Activated B cell treated with CpG ODN at 0.5 μM for 24 hours (primary cell): ENCODE measurements at regions of chr1 and their contacts with region 1.

Region 1: DNA sequence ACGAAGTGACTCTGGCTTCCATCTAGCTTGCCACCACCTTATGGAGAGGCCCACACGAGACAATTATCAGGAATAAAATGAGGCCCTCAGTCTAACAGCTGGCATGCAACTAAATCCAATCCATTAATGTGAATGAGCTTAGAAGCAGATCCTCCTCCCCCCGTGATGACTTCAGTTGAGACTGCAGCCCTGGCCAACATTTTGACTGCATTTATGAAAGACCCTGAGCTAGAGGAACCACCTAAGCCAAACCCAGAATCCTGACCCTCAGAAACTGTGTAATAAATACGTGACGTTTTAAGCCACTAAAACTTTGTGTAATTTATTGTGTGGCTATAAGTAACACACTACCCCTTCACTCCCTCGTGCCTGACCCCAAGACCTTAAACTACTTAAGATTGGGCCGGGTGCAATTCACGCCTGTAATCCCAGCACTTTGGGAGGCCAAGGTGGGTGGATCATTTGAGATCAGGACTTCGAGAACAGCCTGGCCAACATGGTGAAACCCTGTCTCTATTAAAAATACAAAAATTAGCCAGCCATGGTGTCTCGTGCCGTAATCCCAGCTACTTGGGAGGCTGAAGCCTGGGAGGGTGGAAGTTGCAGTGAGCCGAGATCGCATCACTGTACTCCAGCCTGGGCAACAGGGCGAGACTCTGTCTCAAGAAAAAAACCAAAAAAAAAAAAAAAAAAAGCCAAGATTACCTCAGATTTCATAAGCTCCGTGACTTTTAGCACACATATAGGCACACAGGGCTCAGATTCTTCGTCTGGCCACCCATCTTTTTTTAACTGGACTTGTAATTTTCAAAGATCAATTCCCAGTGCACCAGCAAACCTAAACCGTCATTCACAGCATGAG is 72.5 kb downstream of the ENAH start:
- DNase-seq: no peak
- ATAC-seq: no peak
- H3K4me3 Mint-ChIP-seq: no peak overlapping the region
- H3K27ac Mint-ChIP-seq: no peak overlapping the region
- H3K4me1 Mint-ChIP-seq: peaks cover 9% of the 10 kb centered on the region
- H3K27me3 Mint-ChIP-seq: peaks cover 12% of the 10 kb centered on the region
- CTCF ChIP-seq: no peak

Region 2: DNA sequence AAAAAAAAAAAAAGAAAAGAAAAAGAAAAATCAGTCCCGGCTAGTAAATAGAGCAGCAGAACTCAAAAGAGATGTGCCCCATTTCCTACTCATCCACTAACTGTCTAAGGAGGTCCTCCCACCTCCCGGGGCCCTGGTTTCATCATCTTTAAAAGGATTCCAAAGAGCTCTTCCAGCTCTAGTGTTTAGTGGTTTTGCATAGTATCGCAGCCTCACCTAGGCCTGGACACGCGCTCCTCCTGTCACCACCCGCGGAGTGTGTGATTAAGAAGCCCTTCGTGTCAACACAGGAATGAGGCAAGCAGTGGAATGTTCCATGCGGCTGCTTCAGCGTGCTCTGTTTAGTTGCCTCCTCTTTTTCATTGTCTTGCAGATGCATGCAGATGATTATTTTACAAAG is 201.6 kb before region 1 on chr1:
- CTCF ChIA-PET with region 1: no interaction called
- POLR2A ChIA-PET with region 1: no interaction called
- intact Hi-C with region 1: no loop called
- DNase-seq: no peak
- ATAC-seq: no peak
- H3K4me3 Mint-ChIP-seq: no peak overlapping the region
- H3K27ac Mint-ChIP-seq: no peak overlapping the region
- H3K4me1 Mint-ChIP-seq: no peaks in the 10 kb centered on the region
- H3K27me3 Mint-ChIP-seq: no peaks in the 10 kb centered on the region
- CTCF ChIP-seq: no peak

Region 3: GRCh38 chr1:225735252-225736149 is 155.0 kb after region 1 on chr1:
- CTCF ChIA-PET with region 1: no interaction called
- POLR2A ChIA-PET with region 1: no interaction called
- intact Hi-C with region 1: no loop called
- DNase-seq: no peak
- ATAC-seq: no peak
- H3K4me3 Mint-ChIP-seq: no peak overlapping the region
- H3K27ac Mint-ChIP-seq: no peak overlapping the region
- H3K4me1 Mint-ChIP-seq: no peaks in the 10 kb centered on the region
- H3K27me3 Mint-ChIP-seq: no peaks in the 10 kb centered on the region
- CTCF ChIP-seq: no peak

Region 4: DNA sequence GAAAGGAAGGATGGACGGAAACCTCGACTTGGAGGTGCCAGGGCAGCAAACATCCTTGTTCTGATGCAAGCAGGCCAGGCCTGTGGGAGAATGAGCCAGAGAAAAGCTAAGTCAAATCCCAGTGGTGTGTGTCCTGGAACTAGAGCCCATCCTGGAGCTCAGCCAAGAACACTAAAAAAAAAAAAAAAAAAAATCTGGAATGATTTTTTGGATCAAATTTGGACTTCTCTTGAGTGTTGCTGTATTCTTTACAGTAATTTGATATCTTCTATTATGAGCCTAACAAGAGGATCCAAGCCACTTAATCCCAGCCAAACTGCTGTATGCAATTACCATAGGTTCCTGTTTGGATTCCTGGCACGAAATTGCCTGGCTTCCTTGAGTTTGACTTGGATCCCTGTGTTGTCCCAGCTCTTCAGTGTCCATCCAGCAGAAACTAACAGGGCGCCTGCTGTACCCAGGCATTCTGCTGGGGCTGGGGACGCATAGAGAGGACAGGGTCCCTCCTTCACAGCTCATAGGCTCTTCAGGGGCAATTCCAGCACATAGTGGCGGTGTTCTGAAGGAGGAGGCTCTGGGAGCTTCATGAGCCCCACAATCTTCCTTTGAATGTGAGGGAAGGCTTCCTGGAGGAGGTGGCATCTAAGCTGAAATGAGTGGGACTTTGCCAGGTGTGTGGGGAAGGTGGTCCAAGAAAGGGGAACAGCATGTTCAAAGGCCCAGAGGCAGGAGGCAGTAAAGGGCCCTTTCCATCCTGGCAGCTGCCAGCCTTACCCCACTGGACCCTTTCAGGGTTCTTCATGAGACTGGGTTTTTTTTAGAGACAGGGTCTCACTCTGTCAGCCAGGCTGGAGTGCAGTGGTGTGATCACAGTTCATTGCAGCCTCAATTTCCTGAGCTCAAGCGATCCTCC is 254.2 kb after region 1 on chr1:
- CTCF ChIA-PET with region 1: no interaction called
- POLR2A ChIA-PET with region 1: interaction called, 12 read pairs
- intact Hi-C with region 1: no loop called
- DNase-seq: no peak
- ATAC-seq: no peak
- H3K4me3 Mint-ChIP-seq: no peak overlapping the region
- H3K27ac Mint-ChIP-seq: no peak overlapping the region
- H3K4me1 Mint-ChIP-seq: no peaks in the 10 kb centered on the region
- H3K27me3 Mint-ChIP-seq: no peaks in the 10 kb centered on the region
- CTCF ChIP-seq: no peak

Region 5: GRCh38 chr1:225897595-225898521 is 317.4 kb after region 1 on chr1:
- CTCF ChIA-PET with region 1: no interaction called
- POLR2A ChIA-PET with region 1: no interaction called
- intact Hi-C with region 1: no loop called
- DNase-seq: no peak
- ATAC-seq: no peak
- H3K4me3 Mint-ChIP-seq: peak overlapping the region; percentile 48
- H3K27ac Mint-ChIP-seq: peak overlapping the region; percentile 95
- H3K4me1 Mint-ChIP-seq: peaks cover 37% of the 10 kb centered on the region
- H3K27me3 Mint-ChIP-seq: no peaks in the 10 kb centered on the region
- CTCF ChIP-seq: no peak